ENCODE measurements at regions of chr1 and their contacts with region 1.

Region 1: GRCh38 chr1:160795951-160796383 is at the start of gene LY9:
- DNase-seq: peak; percentile 79
- H3K4me3 Mint-ChIP-seq: peak within 1 kb of the TSS; percentile 75
- H3K27ac Mint-ChIP-seq: peak within 1 kb of the TSS; percentile 80
- H3K4me1 Mint-ChIP-seq: peaks cover 62% of the 10 kb centered on the region
- H3K27me3 Mint-ChIP-seq: no peaks in the 10 kb centered on the region
- total RNA-seq, gene LY9: 0.28 and 0.34 TPM in 2 replicates

Region 2: DNA sequence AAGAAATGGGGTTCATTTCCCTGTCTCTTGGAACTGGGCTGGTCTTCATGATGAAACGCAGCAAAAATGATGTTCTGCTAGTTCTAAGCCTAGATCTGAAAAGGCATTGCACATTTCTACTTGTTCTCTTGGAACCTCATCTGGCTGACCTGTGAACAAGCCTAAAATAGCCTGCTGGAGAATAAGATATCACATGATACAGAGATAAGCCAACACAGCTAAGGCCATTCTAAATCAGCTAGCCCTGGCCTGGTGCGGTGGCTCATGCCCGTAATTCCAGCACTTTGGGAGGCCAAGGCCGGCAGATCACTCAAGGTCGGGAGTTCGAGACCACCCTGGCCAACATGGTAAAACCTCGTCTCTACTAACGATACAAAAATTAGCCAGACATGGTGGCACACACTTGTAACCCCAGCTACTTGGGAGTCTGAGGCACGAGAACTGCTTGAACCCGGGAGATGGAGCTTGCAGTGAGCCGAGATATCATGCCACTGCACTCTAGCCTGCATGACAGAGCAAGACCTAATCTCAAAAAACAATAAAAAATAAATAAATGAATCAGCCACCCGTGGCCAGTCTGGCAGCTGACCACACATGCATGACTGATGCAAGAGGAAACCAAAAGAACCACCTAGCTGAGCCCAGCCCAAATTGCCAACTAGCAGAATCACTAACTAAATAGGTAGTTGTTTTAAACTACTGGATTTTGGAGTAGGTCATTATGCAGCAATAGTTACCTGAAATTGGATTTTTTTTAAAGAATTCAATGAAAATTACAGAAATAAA is 48.7 kb after region 1 on chr1:
- intact Hi-C with region 1: no loop called
- DNase-seq: no peak
- H3K4me3 Mint-ChIP-seq: no peak overlapping the region
- H3K27ac Mint-ChIP-seq: no peak overlapping the region
- H3K4me1 Mint-ChIP-seq: peaks cover 8% of the 10 kb centered on the region
- H3K27me3 Mint-ChIP-seq: peaks cover 25% of the 10 kb centered on the region

Region 3: DNA sequence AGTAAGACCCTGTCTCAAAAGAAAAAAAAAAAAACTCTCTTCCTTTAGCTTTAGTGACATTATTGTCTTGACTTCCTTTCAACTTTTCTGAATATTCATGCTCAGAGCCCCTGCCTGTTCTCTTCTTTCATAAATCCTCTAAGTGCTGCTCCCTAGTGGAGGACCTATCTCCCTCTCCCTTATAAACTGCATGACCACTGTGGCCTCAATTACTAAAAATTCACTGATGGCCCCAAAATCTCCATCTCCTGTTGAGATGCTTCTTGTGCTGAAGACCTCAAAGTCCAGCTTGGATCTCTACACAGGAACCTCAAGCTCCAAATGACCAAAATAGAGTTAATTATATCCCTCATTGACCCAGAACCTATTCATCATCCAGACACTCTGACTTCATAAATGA is 81.3 kb after region 1 on chr1:
- intact Hi-C with region 1: loop called (anchors 5 kb)
- DNase-seq: no peak
- H3K4me3 Mint-ChIP-seq: no peak overlapping the region
- H3K27ac Mint-ChIP-seq: no peak overlapping the region
- H3K4me1 Mint-ChIP-seq: peaks cover 10% of the 10 kb centered on the region
- H3K27me3 Mint-ChIP-seq: peaks cover 5% of the 10 kb centered on the region

Region 4: GRCh38 chr1:161098210-161099068 is 302.5 kb after region 1 on chr1 and contains the start of gene KLHDC9:
- intact Hi-C with region 1: no loop called
- DNase-seq: peak; percentile 63
- H3K4me3 Mint-ChIP-seq: peak within 1 kb of the TSS; percentile 78
- H3K27ac Mint-ChIP-seq: peak within 1 kb of the TSS; percentile 84
- H3K4me1 Mint-ChIP-seq: peaks cover 36% of the 10 kb centered on the region
- H3K27me3 Mint-ChIP-seq: no peaks in the 10 kb centered on the region
- total RNA-seq, gene KLHDC9: not detected in 2 replicates